K562 (cell line): ENCODE measurements at regions of chr4 and their contacts with region 1.

Region 1: DNA sequence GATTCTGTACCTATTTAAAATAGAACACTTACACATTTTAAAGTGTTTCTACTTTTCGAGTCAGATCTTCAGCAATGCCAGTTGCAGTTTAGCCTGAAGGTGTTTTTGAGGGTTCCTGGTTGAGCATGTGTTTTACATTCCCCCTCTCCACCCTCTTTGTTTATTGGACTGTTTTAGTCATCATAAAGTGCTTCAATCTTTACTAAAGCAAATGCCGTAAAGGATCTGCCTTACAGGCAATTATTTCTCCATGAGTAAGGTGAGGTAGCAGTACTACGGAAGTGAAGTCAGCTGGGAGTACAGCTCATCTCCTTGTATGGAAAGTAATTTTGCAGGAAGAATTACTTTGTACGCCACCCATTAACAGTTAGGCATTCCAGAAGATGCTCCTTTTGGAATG is 36.9 kb downstream of the PDLIM5 start:
- DNase-seq: no peak
- ATAC-seq: no peak
- H3K4me3 ChIP-seq: no peak overlapping the region
- H3K27ac ChIP-seq: no peak overlapping the region
- H3K4me1 ChIP-seq: peaks cover 0 to 20% of the 10 kb centered on the region in 2 experiments; a peak in 3 of 5 replicates
- H3K27me3 ChIP-seq: no peaks in the 10 kb centered on the region
- CTCF ChIP-seq: no peak
- EP300 ChIP-seq: no peak
- POLR2A ChIP-seq: no peak
- RAD21 ChIP-seq: no peak

Region 2: DNA sequence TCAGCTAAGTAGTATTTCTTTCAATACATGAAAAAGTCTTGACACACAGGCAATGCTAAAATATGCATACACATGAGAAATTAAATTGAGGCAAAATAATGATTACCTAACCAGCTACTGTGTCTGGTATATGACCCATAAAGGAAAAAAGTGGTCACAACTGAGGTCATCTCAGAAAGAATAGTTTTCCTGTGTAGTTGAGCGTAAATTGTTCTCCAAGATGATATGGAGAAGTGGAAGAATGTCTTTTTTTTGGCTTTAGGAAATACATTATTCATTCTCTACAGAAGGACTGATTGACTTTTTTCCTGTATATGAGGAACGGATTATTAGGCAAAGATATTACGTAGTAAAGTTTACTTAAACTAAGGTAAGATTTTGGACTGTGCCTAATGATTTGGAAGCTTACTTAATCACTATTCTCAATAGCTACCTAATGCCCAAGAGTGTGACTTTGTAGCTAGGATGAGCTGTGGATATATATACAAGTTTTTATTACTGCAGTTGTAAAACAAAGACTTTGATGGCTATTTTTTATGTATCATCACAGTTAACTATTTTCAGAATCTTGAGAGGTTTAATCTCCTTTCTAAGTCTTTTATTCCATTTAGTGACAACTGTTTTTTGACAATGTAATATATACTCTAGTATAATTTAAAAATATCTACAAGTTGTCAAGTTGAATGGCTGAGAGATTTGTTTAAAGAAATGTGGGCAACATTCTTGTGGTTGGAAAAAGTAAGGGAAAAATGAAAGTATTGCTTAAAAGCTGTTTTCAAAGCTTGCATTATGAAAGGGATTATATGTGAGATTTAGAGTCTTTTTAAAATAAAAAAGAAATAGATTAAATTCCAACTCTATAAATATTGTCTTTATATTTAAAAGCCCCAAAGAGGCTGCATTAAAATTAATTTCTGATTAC is 63.2 kb after region 1 on chr4:
- CTCF ChIA-PET with region 1: no interaction called
- POLR2A ChIA-PET with region 1: no interaction called
- in situ Hi-C with region 1: no loop called
- intact Hi-C with region 1: loop called (anchors 5 kb)
- DNase-seq: no peak
- ATAC-seq: no peak
- H3K4me3 ChIP-seq: no peak overlapping the region
- H3K27ac ChIP-seq: no peak overlapping the region
- H3K4me1 ChIP-seq: peaks cover 5 to 24% of the 10 kb centered on the region in 2 experiments; a peak in 4 of 5 replicates
- H3K27me3 ChIP-seq: no peaks in the 10 kb centered on the region
- CTCF ChIP-seq: no peak
- EP300 ChIP-seq: no peak
- POLR2A ChIP-seq: no peak
- RAD21 ChIP-seq: no peak

Region 3: DNA sequence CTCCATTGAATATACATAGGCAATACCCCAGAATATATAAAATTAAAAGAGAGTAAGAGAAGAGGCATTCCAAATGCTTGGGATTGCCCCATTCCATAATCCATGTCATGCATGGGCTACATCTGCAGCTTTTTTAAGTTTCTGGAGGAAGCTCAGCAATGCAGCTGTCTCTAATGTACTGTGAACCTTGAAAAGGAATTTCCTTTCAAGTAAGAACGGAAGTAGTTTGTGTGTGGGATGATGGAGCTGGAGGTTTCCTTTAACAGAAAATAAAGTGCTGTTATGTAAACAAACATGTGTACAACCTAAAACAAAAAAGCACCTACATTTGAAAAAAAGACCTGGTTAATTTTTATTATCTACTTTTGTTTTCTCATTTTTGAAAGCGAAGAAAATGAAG is 572.6 kb after region 1 on chr4:
- CTCF ChIA-PET with region 1: no interaction called
- POLR2A ChIA-PET with region 1: no interaction called
- in situ Hi-C with region 1: no loop called
- intact Hi-C with region 1: no loop called
- DNase-seq: no peak
- ATAC-seq: no peak
- H3K4me3 ChIP-seq: no peak overlapping the region
- H3K27ac ChIP-seq: no peak overlapping the region
- H3K4me1 ChIP-seq: no peaks in the 10 kb centered on the region
- H3K27me3 ChIP-seq: no peaks in the 10 kb centered on the region
- CTCF ChIP-seq: no peak
- EP300 ChIP-seq: no peak
- POLR2A ChIP-seq: no peak
- RAD21 ChIP-seq: no peak